PC-3 (cell line): ENCODE measurements at regions of chrX and their contacts with region 1.

Region 1: GRCh38 chrX:41384041-41384705 is 50.2 kb downstream of the DDX3X start:
- DNase-seq: peak; percentile 72
- ATAC-seq: peak; percentile 68
- H3K4me3 ChIP-seq: no peak overlapping the region
- H3K27ac ChIP-seq: peak overlapping the region; percentile 75
- H3K4me1 ChIP-seq: peaks cover 41% of the 10 kb centered on the region
- H3K27me3 ChIP-seq: no peaks in the 10 kb centered on the region
- CTCF ChIP-seq: no peak

Region 2: GRCh38 chrX:40845331-40845911 is 538.8 kb before region 1 on chrX:
- CTCF ChIA-PET with region 1: no interaction called
- POLR2A ChIA-PET with region 1: interaction called, 14 read pairs
- intact Hi-C with region 1: no loop called
- DNase-seq: peak; percentile 14
- ATAC-seq: no peak
- H3K4me3 ChIP-seq: no peak overlapping the region
- H3K27ac ChIP-seq: no peak overlapping the region
- H3K4me1 ChIP-seq: no peaks in the 10 kb centered on the region
- H3K27me3 ChIP-seq: no peaks in the 10 kb centered on the region
- CTCF ChIP-seq: no peak

Region 3: DNA sequence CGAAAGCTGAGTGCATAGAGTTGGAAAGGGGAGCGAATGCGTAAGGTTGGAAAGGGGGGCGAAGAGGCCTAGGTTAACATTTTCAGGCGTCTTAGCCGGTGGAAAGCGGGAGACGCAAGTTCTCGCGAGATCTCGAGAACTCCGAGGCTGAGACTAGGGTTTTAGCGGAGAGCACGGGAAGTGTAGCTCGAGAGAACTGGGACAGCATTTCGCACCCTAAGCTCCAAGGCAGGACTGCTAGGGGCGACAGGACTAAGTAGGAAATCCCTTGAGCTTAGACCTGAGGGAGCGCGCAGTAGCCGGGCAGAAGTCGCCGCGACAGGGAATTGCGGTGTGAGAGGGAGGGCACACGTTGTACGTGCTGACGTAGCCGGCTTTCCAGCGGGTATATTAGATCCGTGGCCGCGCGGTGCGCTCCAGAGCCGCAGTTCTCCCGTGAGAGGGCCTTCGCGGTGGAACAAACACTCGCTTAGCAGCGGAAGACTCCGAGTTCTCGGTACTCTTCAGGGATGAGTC is 50.4 kb before region 1 on chrX and contains the start of gene DDX3X:
- CTCF ChIA-PET with region 1: no interaction called
- POLR2A ChIA-PET with region 1: interaction called, 11 read pairs
- intact Hi-C with region 1: no loop called
- DNase-seq: peak; percentile 81
- ATAC-seq: peak; percentile 67
- H3K4me3 ChIP-seq: peak within 1 kb of the TSS; percentile 100
- H3K27ac ChIP-seq: peak within 1 kb of the TSS; percentile 91
- H3K4me1 ChIP-seq: peaks cover 28% of the 10 kb centered on the region
- H3K27me3 ChIP-seq: no peaks in the 10 kb centered on the region
- CTCF ChIP-seq: 0 out of 2 replicates have a peak, but pooled peaks have one; percentile 14
- total RNA-seq, gene DDX3X: 167 and 185 TPM in 2 replicates

Region 4: DNA sequence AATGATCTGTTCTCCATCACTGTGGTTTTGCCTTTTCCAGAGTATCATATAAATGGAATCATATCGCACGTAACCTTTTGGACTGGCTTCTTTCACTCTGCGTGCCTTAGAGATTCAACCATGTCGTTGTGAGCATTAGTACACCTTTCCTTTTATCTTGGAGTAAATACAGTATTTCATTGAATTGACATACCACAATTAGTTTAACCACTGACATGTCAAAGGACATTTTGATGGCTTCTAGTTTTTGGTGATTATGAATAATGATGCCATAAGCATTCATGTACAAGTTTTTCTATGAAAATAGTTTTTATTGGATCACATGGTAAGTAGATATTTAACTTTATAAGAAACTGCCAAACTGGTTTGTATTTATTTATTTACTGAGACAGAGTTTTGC is 15.0 kb before region 1 on chrX:
- CTCF ChIA-PET with region 1: no interaction called
- POLR2A ChIA-PET with region 1: no interaction called
- intact Hi-C with region 1: no loop called
- DNase-seq: no peak
- ATAC-seq: no peak
- H3K4me3 ChIP-seq: no peak overlapping the region
- H3K27ac ChIP-seq: no peak overlapping the region
- H3K4me1 ChIP-seq: no peaks in the 10 kb centered on the region
- H3K27me3 ChIP-seq: no peaks in the 10 kb centered on the region
- CTCF ChIP-seq: no peak

Region 5: DNA sequence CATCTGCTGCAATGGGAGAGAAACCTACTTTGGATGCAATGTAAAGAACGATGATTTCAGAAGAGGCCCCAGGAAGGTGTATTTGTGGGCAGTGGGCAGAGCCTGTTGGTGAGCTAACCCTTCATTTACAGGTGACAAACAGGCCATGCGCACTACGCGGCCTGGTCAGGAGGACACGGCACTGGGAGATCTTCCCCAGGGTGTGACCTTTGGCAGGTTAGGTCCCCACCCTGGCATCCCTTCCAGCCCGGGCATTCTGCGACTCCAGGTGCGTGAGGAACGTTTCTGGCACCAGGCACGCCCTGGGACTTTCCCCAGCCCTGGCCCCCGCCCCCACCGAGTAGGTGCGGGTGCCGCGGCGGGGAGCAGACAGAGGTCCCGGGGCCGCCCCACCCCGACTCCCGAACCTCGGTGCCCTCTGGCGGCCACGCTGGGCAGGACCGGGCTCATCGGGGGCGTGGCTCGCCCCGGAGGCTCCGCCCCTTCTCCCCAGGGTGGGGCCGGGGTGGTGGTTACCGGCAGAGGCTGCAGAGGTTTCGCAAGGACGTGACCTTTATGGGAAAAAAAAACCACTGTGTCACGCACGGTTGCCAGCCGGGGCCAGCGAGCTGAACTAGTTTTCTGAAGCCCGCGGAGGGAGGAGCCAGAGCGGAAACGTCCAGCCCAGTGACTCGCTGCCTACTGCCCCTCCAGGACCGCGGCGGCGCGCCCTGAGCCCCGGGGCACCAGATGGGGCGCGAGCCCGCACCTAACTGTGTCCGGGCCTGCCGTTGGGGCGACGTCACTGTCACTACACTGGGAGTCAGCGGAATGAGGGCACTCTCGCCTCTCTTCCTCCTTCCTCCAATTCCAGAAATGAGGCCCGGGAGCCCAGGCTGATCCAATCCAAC is 58.0 kb after region 1 on chrX:
- CTCF ChIA-PET with region 1: no interaction called
- POLR2A ChIA-PET with region 1: no interaction called
- intact Hi-C with region 1: loop called (anchors 5 kb)
- DNase-seq: peak; percentile 84
- ATAC-seq: peak; percentile 95
- H3K4me3 ChIP-seq: peak overlapping the region; percentile 68
- H3K27ac ChIP-seq: no peak overlapping the region
- H3K4me1 ChIP-seq: peaks cover 16% of the 10 kb centered on the region; the same call in 1 of the 2 replicates
- H3K27me3 ChIP-seq: no peaks in the 10 kb centered on the region
- CTCF ChIP-seq: peak; percentile 66